AG04449 (cell line): ENCODE measurements at regions of chr5 and their contacts with region 1.

Region 1: GRCh38 chr5:151686674-151687407 is at the start of gene SPARC:
- DNase-seq: peak; percentile 87
- H3K4me3 ChIP-seq: peak within 1 kb of the TSS; percentile 100
- CTCF ChIP-seq: peak; percentile 4

Region 2: GRCh38 chr5:151659001-151659754 is 27.7 kb before region 1 on chr5:
- CTCF ChIA-PET with region 1: interaction called, 10 read pairs
- POLR2A ChIA-PET with region 1: interaction called, 24 read pairs
- DNase-seq: no peak
- H3K4me3 ChIP-seq: no peak overlapping the region
- CTCF ChIP-seq: peak; percentile 88

Region 3: DNA sequence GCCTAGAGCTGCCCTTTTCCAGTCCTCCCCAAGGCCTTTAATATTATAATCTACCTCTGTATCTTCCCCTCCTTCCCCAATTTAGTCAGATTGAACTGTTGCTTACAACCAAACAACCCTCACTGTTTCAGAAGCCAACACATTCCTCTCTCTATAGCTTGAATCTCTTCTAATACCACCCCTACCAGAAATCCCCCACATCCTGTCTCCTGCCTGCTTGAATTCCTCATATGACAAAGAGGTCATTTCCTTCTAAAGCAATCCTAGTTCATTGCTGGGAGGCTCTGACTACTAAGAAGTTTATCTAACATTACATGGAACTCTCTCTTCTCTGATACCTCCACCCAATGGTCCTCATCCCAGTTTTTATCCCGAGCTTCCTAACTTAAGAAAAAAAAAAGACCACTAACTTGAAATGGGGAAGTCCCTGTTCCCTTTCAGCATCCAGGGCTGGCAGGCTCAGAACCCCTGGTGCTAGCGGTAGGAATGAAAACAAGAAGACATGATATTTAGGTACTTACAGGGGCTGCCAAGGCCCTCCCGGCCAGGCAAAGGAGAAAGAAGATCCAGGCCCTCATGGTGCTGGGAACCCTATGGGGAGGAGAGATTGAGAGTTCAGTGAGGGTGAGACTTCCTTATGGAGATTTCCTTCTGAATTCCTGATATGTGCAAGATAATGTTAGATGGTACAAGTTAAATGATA is 11.1 kb before region 1 on chr5:
- CTCF ChIA-PET with region 1: interaction called, 10 read pairs
- POLR2A ChIA-PET with region 1: interaction called, 53 read pairs
- DNase-seq: no peak
- H3K4me3 ChIP-seq: no peak overlapping the region; the same call in 1 of the 2 replicates
- CTCF ChIP-seq: no peak

Region 4: DNA sequence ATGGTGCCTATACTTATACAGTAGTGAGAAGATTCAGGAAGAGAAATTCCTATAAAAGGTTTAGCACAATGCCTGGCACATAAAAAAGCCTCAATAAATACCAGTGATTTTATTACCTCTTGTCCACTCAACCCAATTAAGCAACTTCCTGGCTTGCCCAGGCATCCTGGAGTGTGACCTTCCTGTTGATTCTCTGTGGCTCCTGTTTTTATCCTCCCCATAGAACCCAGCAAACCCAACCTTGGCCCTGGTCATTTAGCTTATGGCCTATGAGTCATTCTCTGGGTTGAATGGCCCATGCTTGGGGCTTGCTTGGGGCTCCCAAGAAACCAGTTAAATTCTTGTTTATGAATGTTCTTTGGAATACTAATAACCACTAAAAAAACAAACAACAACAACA is 21.3 kb after region 1 on chr5:
- CTCF ChIA-PET with region 1: interaction called, 3 read pairs
- POLR2A ChIA-PET with region 1: interaction called, 16 read pairs
- DNase-seq: no peak
- H3K4me3 ChIP-seq: no peak overlapping the region
- CTCF ChIP-seq: no peak

Region 5: GRCh38 chr5:151771259-151772028 is 84.6 kb after region 1 on chr5 and contains the start of gene G3BP1:
- CTCF ChIA-PET with region 1: no interaction called
- POLR2A ChIA-PET with region 1: interaction called, 15 read pairs
- DNase-seq: peak; percentile 100
- H3K4me3 ChIP-seq: peak within 1 kb of the TSS; percentile 87
- CTCF ChIP-seq: peak; percentile 66

Region 6: GRCh38 chr5:152527358-152528052 is 840.7 kb after region 1 on chr5:
- CTCF ChIA-PET with region 1: no interaction called
- POLR2A ChIA-PET with region 1: no interaction called
- DNase-seq: no peak
- H3K4me3 ChIP-seq: no peak overlapping the region
- CTCF ChIP-seq: no peak